AG04449 (cell line): ENCODE measurements at regions of chr16 and their contacts with region 1.

Region 1: DNA sequence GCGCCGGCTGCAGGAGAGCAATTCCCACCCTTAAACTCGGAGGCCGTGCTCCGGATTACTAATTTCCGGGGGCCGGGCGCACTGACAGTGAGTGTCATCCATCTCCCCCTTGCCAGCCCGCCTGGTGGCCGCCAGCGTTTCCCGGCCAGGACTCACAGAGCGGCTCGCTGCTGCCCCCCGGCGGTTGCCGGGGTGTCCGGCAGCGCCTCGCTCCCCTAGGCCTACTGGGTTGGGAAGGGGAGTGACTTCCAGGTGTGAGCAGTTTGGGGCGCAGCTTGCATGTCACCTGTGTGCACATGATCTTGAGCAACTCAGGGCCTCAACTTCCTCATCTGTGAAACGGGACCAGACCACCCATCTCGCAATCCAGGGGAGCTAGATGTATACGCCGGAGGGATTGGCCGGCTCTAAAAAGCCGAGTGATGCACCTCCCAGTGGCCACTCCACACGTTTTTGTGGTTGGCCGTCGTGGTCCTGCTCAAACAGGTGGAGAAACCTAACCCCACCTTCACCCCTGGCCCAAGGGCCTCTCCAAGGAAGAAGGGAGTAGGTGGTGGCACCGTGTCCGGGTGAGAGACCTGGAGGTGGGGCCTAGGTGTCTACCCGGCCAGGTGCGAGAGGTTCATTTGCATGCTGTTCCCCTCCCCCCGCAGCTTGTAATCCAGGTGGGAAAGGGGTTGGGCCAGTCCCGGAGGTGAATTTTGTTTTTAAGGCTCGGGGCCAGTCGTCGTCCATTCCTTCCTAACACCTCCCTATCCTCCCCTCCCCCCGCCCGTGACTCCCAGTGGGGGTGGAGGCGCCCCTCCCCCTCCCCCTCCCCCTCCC is 2.4 kb upstream of the GSE1 start:
- DNase-seq: no peak
- H3K4me3 ChIP-seq: peak overlapping the region; percentile 25
- CTCF ChIP-seq: peak; percentile 95

Region 2: DNA sequence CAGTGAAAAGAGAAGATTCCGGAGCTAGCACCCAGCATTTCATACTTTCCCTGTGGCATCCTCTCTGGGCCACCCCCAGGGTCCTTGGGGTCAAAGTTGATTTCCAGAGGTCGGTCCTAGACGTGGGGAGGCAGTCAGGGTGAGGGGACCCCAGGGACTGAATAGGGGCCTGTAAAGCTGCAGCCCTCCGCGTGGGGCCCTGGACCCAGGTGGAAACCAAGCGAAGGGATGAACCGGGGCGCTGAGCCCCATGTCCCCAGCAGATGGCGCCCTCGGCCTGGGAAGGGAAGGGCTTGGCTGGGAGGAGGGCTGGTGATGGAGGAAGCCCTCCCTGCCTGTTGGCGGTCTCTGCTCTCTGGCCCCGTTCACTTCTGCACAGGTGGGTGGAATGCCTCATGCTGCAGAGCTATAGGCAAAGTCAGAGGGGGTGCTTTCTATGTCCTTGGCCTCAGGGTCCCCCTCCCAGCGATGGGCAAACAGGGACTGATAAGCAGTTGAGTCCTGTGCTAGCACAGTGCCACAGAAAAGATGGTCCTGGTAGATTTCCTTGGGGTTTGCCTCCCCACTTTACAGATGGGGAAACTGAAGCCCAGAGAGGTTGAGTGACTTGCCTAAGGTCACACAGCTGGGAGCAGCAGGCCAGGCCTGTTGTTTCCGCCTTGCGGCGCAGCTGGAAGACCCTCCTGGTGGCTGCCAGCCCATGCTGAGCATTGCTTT is 335.0 kb before region 1 on chr16:
- CTCF ChIA-PET with region 1: interaction called, 50 read pairs
- POLR2A ChIA-PET with region 1: no interaction called
- DNase-seq: no peak
- H3K4me3 ChIP-seq: no peak overlapping the region
- CTCF ChIP-seq: peak; percentile 96

Region 3: GRCh38 chr16:85369741-85370528 is 240.8 kb before region 1 on chr16:
- CTCF ChIA-PET with region 1: interaction called, 48 read pairs
- POLR2A ChIA-PET with region 1: no interaction called
- DNase-seq: no peak
- H3K4me3 ChIP-seq: no peak overlapping the region
- CTCF ChIP-seq: peak; percentile 86

Region 4: GRCh38 chr16:85420501-85421337 is 190.0 kb before region 1 on chr16:
- CTCF ChIA-PET with region 1: interaction called, 59 read pairs
- POLR2A ChIA-PET with region 1: no interaction called
- DNase-seq: no peak
- H3K4me3 ChIP-seq: no peak overlapping the region
- CTCF ChIP-seq: peak; percentile 96

Region 5: GRCh38 chr16:85514595-85515318 is 96.0 kb before region 1 on chr16:
- CTCF ChIA-PET with region 1: interaction called, 10 read pairs
- POLR2A ChIA-PET with region 1: no interaction called
- DNase-seq: peak; percentile 73
- H3K4me3 ChIP-seq: peak overlapping the region; percentile 23
- CTCF ChIP-seq: no peak

Region 6: DNA sequence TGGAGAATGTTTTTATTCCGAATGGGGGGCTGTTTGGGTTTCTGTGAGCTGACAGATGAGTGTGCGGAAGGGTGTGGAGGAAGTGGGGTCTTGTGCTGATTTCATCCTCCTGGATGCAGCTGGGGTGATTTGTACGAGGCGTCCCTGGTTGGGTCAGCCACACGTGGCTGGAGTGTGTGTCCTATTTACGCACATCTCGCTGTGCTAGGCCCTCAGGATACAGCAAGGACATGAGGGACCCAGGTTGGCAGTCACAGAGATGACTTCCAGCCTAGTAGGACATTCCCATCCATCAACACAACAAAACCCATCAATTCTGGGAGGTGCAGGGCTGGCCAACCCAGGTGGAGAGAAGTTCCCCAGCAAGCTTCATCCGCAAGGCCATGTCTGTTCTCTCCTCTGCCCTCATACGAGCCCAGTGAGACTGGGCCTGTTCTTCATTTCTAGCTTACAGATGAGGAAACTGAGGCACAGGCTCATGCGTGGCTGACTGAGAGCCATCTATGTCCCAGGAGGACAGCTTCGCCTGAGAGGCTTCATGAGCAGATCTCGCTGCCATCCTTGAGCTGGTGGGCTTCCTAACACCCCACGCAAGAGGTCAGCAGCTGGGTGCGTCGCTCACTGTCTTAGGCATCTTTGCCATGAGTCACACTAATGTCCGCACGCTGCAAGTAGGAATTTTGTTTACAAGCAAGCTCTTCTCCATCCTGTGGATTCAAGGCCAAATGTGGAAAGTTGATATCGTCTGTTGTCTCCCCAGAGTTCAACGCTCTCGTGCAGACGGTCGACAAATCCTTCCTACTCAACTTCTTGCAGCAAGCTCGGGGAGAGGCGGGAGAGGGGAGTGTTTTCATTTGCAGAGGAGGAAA is 312.7 kb after region 1 on chr16:
- CTCF ChIA-PET with region 1: no interaction called
- POLR2A ChIA-PET with region 1: no interaction called
- DNase-seq: no peak
- H3K4me3 ChIP-seq: no peak overlapping the region
- CTCF ChIP-seq: no peak